IMR-90 (cell line): ENCODE measurements at regions of chr14 and their contacts with region 1.

Region 1: DNA sequence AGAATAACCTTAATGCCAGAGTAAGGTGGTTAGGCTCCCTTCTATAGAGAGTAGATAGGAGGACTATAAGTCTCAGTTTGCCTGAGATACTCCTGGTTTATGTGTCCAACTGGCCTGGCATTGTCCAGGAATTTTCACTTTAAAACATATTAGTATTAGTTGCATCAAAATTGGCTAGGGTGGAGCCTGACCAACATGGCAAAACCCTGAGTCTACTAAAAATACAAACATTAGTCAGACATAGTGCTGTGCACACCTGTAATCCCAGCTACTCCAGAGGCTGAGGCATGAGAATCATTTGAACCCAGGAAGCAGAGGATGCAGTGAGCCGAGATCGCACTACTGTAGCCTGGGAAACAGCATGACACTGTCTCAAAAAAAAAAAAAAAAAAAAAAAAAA is 11.9 kb downstream of the WDHD1 start:
- DNase-seq: no peak
- ATAC-seq: no peak
- H3K4me3 ChIP-seq: no peak overlapping the region
- H3K27ac ChIP-seq: no peak overlapping the region
- H3K4me1 ChIP-seq: peaks cover 3% of the 10 kb centered on the region; the same call in 1 of the 2 replicates
- H3K27me3 ChIP-seq: no peaks in the 10 kb centered on the region
- CTCF ChIP-seq: no peak
- POLR2A ChIP-seq: no peak
- RAD21 ChIP-seq: no peak

Region 2: GRCh38 chr14:54597795-54598443 is 417.1 kb before region 1 on chr14:
- CTCF ChIA-PET with region 1: no interaction called
- POLR2A ChIA-PET with region 1: no interaction called
- dilution Hi-C with region 1: no loop called
- in situ Hi-C with region 1: no loop called
- intact Hi-C with region 1: no loop called
- DNase-seq: peak; percentile 70
- ATAC-seq: peak; percentile 43
- H3K4me3 ChIP-seq: no peak overlapping the region
- H3K27ac ChIP-seq: peak overlapping the region; percentile 76; the same call in 1 of the 2 replicates
- H3K4me1 ChIP-seq: peaks cover 14% of the 10 kb centered on the region
- H3K27me3 ChIP-seq: no peaks in the 10 kb centered on the region
- CTCF ChIP-seq: no peak
- POLR2A ChIP-seq: no peak
- RAD21 ChIP-seq: no peak

Region 3: DNA sequence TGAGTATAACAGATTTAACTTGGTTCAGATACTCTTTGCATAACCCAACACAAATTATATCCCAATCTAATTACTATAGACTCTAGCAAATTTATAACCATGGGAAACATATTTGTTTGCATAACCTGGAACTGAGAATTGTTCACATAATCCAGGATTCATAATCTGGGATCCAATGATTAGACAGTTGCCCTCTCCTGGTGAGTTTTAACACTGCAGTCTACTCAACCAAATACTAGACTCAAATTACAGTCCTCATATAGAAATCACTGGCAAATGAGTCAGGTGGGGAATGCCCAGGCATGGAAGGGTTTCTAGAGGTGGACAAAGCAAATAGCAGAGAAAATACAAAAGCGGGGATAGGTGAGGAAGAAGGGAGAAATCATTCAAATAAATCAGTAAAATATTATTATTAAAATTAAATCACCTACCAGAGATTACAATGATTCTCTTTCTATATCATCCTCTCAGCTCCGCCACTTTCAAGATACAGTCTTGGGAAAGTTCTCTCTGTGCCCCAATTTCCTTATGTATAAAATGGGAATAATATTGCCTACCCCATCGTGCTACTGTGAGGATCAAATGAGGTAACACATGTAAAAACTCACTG is 121.8 kb before region 1 on chr14:
- CTCF ChIA-PET with region 1: no interaction called
- POLR2A ChIA-PET with region 1: interaction called, 19 read pairs
- dilution Hi-C with region 1: no loop called
- in situ Hi-C with region 1: no loop called
- intact Hi-C with region 1: no loop called
- DNase-seq: peak; percentile 80
- ATAC-seq: peak; percentile 73
- H3K4me3 ChIP-seq: no peak overlapping the region
- H3K27ac ChIP-seq: no peak overlapping the region
- H3K4me1 ChIP-seq: no peaks in the 10 kb centered on the region
- H3K27me3 ChIP-seq: no peaks in the 10 kb centered on the region
- CTCF ChIP-seq: peak; percentile 71
- POLR2A ChIP-seq: no peak
- RAD21 ChIP-seq: peak; percentile 50; the same call in 1 of the 2 replicates